Mammary epithelial cell (primary cell): ENCODE measurements at regions of chr9 and their contacts with region 1.

Region 1: DNA sequence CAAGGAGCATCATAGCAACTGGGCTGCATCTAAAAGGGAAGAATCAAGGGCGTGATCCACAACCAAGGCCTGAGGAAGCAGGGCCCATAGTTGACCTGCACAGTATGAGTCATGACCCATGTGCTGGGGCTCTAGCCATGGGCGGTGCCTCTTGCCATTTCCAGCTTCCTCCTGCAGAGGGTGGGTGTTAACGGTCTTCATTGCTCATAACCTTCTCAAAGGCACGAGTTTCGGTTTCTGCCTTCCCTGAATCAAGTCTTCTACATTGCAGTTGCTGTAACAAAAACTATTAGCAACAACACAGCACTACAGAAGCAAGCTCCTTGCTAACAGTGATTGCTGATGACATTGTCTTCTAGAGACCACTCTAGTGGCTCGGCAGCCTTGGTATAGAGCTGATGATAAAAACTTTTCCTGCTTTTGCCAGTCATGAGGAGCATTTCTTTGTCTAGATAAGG is 66.9 kb downstream of the CTSL start:
- DNase-seq: peak; percentile 55
- H3K4me3 ChIP-seq: no peak overlapping the region
- H3K27ac ChIP-seq: no peak overlapping the region
- H3K4me1 ChIP-seq: peaks cover 10% of the 10 kb centered on the region
- H3K27me3 ChIP-seq: no peaks in the 10 kb centered on the region
- CTCF ChIP-seq: no peak

Region 2: GRCh38 chr9:87742813-87743428 is 49.9 kb before region 1 on chr9:
- CTCF ChIA-PET with region 1: no interaction called
- dilution Hi-C with region 1: no loop called
- in situ Hi-C with region 1: no loop called
- intact Hi-C with region 1: loop called (anchors 5 kb)
- DNase-seq: peak; percentile 58
- H3K4me3 ChIP-seq: no peak overlapping the region
- H3K27ac ChIP-seq: no peak overlapping the region
- H3K4me1 ChIP-seq: no peaks in the 10 kb centered on the region
- H3K27me3 ChIP-seq: no peaks in the 10 kb centered on the region
- CTCF ChIP-seq: no peak

Region 3: GRCh38 chr9:87812375-87813118 is 19.7 kb after region 1 on chr9:
- CTCF ChIA-PET with region 1: no interaction called
- dilution Hi-C with region 1: no loop called
- in situ Hi-C with region 1: no loop called
- intact Hi-C with region 1: no loop called
- DNase-seq: peak; percentile 62
- H3K4me3 ChIP-seq: no peak overlapping the region
- H3K27ac ChIP-seq: no peak overlapping the region
- H3K4me1 ChIP-seq: peaks cover 10% of the 10 kb centered on the region
- H3K27me3 ChIP-seq: no peaks in the 10 kb centered on the region
- CTCF ChIP-seq: peak; percentile 98 to 100

Region 4: DNA sequence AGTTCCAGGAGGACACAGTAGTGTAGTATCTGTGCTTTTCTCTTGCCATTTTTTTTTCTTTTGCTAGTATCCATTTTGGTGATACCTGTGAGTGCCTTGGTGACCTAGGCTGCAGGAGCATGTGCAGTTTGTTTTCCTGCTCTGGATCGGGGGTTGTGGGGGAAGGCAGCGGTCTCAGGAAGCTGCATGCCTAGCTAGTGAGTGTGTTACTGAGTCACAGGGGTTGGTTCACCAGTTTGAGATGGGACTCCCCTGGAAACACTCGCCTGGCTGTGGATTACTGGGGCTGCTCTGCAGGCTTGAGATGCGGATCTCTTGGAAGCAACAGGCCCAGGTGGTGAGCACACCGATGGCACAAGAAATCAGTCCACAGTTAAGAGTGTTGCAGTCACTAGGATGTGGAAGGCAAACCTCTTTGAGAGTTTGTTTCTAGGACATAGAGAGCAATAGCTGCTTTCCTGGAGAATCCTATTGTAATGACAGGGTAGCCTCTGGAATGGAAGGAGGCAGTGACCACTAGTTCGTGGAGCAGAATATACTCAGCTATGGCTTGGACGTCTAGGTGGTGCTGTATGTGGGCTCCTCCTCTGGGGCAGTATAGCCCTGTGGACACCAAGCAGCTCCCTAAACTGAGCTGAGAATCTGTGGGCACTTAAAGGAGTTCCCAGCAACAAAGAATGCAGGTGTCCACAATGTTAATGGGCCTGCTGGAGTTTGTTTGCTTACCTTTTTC is 69.8 kb after region 1 on chr9:
- CTCF ChIA-PET with region 1: no interaction called
- dilution Hi-C with region 1: no loop called
- in situ Hi-C with region 1: no loop called
- intact Hi-C with region 1: no loop called
- DNase-seq: peak; percentile 90
- H3K4me3 ChIP-seq: no peak overlapping the region
- H3K27ac ChIP-seq: peak overlapping the region; percentile 87
- H3K4me1 ChIP-seq: peaks cover 13% of the 10 kb centered on the region
- H3K27me3 ChIP-seq: no peaks in the 10 kb centered on the region
- CTCF ChIP-seq: no peak

Region 5: DNA sequence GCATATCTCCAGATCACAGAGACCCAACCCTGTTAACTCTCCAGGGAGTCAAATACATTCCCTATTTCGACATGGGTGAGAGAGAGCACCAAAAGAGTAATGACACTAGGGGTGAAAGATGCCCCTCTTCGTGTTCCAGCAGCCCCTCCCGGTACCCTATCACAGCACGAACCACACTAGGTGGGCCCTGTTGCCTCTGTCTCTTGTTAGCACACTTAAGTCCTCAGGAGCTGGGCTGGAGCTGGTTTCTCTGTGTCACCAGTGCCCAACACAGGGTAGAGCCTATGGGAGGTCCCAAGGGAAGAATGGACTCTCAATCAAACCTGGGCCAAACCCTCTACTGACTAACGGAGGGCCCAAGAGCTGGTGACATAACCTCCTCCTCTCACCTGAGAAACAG is 180.3 kb after region 1 on chr9:
- CTCF ChIA-PET with region 1: no interaction called
- dilution Hi-C with region 1: no loop called
- in situ Hi-C with region 1: no loop called
- intact Hi-C with region 1: no loop called
- DNase-seq: no peak
- H3K4me3 ChIP-seq: no peak overlapping the region
- H3K27ac ChIP-seq: no peak overlapping the region
- H3K4me1 ChIP-seq: peaks cover 6% of the 10 kb centered on the region
- H3K27me3 ChIP-seq: no peaks in the 10 kb centered on the region
- CTCF ChIP-seq: no peak